Head of caudate nucleus (tissue), 42 donors: ENCODE measurements at regions of chr6 and their contacts with region 1.

Region 1: DNA sequence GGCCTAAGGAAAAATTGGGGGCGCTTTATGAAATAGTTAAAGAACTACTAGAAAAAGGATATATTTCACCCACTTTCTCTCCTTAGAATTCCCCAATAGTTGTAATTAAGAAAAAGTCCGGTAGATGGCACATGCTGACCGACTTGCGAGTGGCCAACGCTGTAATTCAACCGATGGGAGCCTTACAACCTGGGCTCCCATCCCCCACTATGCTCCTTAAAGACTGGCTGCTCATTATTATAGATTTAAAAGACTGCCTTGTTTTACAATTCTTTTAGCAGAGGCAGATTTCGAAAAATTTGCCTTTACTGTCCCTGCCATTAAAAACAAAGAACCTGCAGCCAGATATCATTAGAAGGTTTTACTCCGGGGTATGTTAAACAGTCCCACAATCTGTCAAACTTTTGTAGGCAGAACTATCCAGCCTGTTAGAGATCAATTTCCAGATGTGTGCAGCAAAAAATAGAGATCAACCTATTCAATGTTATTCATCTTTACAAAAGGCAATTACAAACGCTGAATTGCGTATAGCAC is 58.5 kb upstream of the PRSS16 start:
- DNase-seq: peak in 38 of 42 donors; percentile 7 to 75 (median 45)

Region 2: DNA sequence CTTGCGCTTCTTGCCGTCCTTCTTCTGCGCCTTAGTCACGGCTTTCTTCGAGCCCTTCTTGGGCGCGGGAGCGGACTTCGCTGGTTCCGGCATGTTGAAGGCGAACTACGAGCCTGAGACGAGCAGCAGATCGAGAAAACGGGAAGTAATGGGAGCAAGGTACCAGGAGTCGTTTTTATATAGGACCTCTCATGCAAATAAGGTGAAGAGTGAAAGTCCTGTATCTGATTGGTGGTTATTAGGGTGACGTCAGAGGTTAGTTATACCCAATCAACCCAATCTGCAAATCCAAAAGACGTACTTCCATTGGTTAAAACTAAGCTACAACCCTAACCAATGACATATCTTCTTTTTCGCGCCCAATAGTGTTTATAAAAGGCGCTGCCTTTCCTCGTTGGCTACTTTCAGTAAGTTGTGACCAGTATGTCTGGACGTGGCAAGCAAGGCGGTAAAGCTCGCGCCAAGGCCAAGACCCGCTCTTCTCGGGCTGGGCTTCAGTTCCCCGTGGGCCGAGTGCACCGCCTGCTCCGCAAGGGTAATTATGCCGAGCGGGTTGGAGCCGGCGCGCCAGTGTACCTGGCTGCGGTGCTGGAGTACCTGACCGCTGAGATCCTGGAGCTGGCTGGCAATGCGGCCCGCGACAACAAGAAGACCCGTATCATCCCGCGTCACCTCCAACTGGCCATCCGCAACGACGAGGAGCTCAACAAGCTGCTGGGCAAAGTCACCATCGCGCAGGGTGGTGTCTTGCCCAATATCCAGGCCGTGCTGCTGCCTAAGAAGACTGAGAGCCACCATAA is 42.0 kb before region 1 on chr6:
- intact Hi-C with region 1: no loop called
- DNase-seq: peak; percentile 37 to 89 (median 69)

Region 3: DNA sequence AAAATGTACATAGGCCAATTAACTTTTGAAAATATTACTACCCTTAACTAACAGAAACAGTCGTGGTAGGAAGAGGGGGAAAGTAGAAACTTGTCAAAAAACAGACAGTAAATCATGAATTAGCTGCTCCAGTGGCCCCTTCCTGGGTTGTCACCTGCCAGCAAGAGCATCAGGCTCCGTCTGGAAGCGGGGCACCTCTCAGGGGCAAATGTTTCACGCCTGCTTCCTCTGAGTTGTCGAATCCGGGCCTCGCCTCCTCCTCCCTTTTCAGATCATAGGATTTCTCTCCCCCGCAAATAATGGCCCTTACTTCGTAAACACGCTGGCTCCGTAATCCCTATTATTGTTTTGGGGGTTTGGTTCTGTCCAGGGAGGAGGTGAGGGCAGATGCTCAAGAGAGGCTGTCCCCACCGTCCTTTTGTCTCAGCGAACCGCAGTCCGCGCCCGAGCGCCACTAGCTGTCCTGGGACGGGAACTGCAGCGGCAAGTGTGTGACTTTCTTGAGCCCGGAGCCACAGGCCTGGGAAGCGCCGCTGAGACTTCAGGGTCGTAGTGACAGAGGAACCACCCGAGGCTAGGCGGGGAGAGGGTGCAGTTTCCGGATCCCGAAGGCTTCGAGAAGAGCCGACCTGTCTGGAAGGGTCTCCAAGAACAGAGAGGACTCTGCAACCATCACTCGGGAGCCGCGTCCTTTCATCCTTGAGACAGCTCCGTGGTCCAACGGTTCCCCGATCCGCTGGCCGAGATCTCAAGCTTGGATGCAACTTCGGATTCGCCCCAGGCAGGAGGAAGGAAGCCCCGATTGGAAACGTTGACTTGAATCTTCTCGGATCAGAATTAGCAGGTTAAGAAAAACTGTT is 498.4 kb after region 1 on chr6:
- intact Hi-C with region 1: loop called (anchors 10 kb)
- DNase-seq: peak; percentile 65 to 94 (median 83)